Activated CD4-positive, alpha-beta T cell treated with anti-CD3 and anti-CD28 coated beads for 36 hours (primary cell): ENCODE measurements at regions of chr13 and their contacts with region 1.

Region 1: DNA sequence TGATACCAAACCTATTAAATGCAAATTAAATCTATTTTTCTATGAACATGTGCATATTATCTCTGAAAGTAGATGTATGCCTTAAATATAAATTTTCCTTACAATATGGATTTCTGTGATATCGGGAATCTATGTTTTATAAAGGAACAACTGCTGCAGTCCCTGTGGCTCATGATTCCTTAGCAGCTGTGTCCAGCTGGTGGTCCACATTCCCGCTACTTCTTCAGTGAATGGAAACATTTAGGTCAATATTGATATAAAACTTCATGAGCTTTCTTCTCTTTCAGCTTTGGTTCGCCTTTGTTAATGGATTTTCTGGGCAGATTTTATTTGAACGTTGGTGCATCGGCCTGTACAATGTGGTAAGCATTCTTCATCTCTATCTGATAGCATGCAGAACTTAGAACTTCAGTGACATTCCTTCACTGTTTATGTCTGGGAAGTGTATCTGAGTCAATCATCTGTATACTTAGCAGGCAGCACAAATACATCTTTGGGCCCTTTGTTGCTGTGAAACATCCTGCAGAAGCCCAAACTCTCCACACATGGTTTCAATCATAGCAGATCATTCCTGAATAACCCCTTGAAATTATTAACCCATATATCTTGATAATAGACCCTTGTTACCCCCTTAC is 223.9 kb downstream of the SHISA2 start:
- DNase-seq: no peak
- ATAC-seq: no peak
- H3K4me3 Mint-ChIP-seq: no peak overlapping the region
- H3K27ac Mint-ChIP-seq: no peak overlapping the region
- H3K4me1 Mint-ChIP-seq: no peaks in the 10 kb centered on the region
- H3K27me3 Mint-ChIP-seq: no peaks in the 10 kb centered on the region

Region 2: GRCh38 chr13:26062844-26063444 is 235.0 kb after region 1 on chr13:
- CTCF ChIA-PET with region 1: interaction called, 5 read pairs
- POLR2A ChIA-PET with region 1: no interaction called
- intact Hi-C with region 1: loop called (anchors 1 to 2 kb)
- DNase-seq: peak; percentile 40
- ATAC-seq: peak; percentile 49
- H3K4me3 Mint-ChIP-seq: no peak overlapping the region
- H3K27ac Mint-ChIP-seq: no peak overlapping the region
- H3K4me1 Mint-ChIP-seq: no peaks in the 10 kb centered on the region
- H3K27me3 Mint-ChIP-seq: peaks cover 1% of the 10 kb centered on the region